ENCODE measurements at regions of chr9 and their contacts with region 1.

Region 1: GRCh38 chr9:115845653-115846312 is 307.8 kb upstream of the PAPPA start:
- DNase-seq: no peak
- H3K4me3 ChIP-seq: no peak overlapping the region
- H3K27ac ChIP-seq: no peak overlapping the region
- H3K4me1 ChIP-seq: no peaks in the 10 kb centered on the region
- H3K27me3 ChIP-seq: no peaks in the 10 kb centered on the region
- CTCF ChIP-seq: no peak
- EP300 ChIP-seq: no peak
- POLR2A ChIP-seq: no peak

Region 2: GRCh38 chr9:113963017-113963620 is 1882.7 kb before region 1 on chr9:
- intact Hi-C with region 1: no loop called
- DNase-seq: peak in 1 of 5 donors; percentile 39
- H3K4me3 ChIP-seq: no peak overlapping the region
- H3K27ac ChIP-seq: no peak overlapping the region
- H3K4me1 ChIP-seq: peaks cover 9% of the 10 kb centered on the region
- H3K27me3 ChIP-seq: no peaks in the 10 kb centered on the region
- CTCF ChIP-seq: no peak
- EP300 ChIP-seq: no peak
- POLR2A ChIP-seq: no peak

Region 3: DNA sequence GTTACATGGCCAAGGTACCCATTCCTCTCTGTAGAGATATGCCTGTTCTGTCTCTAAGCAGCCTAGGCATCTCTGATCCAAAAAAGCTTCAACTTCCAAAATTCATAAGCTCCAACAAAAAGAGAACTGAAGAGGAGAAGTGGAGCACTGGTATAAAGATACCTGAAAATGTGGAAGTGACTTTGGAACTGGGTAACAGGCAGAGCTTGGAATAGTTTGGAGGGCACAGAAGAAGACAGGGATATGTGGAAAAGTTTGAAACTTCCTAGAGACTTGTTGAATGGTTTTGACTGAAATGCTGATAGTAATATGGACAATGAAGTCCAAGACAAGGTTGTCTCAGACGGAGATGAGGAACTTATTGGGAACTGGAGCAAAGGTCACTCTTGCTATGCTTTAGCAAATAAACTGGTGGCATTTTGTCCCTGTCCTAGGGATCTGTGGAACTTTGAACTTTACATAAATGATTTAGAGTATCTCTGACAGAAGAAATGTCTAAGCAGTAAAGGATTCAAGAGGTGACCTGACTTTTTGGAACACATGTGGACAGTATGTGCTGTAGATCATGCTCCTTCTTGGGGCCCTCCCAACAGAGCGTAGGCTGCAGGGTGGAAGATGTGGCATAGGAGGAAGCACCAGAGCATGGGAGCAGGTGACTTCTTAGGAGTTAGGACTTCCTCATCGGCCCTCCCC is 679.1 kb after region 1 on chr9:
- intact Hi-C with region 1: loop called in 1 of 4 experiments (anchors 5 kb)
- DNase-seq: no peak
- H3K4me3 ChIP-seq: no peak overlapping the region
- H3K27ac ChIP-seq: no peak overlapping the region
- H3K4me1 ChIP-seq: no peaks in the 10 kb centered on the region
- H3K27me3 ChIP-seq: no peaks in the 10 kb centered on the region
- CTCF ChIP-seq: no peak
- EP300 ChIP-seq: no peak
- POLR2A ChIP-seq: no peak

Measured in ovary (tissue), 10 donors.